Activated CD4-positive, alpha-beta T cell treated with anti-CD3 and anti-CD28 coated beads, Interleukin-2, amount 10 ng/mL, durations not matched to agents 7 days and 5 days (primary cell): ENCODE measurements at regions of chr11 and their contacts with region 1.

Region 1: GRCh38 chr11:33033493-33033892 is 5.9 kb upstream of the TCP11L1 start:
- DNase-seq: no peak
- H3K4me3 Mint-ChIP-seq: no peak overlapping the region
- H3K27ac Mint-ChIP-seq: no peak overlapping the region
- H3K4me1 Mint-ChIP-seq: no peaks in the 10 kb centered on the region
- H3K27me3 Mint-ChIP-seq: peaks cover 24% of the 10 kb centered on the region

Region 2: DNA sequence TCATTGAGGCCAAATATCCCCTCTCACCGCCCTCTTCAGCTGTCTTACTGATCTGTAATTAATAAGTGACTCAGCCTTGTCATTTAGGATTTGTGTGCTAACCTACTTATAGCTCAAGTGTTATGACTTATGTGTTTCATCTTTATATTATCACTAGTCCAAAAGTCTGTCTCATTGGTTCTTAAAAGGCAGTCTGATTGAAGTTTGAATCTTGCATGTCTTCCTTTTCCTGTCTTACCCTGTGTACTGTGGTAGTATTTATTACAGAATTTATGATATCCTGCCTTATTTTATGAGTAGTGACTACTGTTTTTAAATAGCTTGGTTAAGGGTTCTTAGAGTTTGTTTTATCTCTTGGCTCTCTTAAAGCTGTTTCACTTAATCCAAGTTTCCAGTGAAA is 11.6 kb before region 1 on chr11:
- CTCF ChIA-PET with region 1: interaction called, 13 read pairs
- POLR2A ChIA-PET with region 1: no interaction called
- DNase-seq: no peak
- H3K4me3 Mint-ChIP-seq: no peak overlapping the region
- H3K27ac Mint-ChIP-seq: no peak overlapping the region
- H3K4me1 Mint-ChIP-seq: peaks cover 4% of the 10 kb centered on the region
- H3K27me3 Mint-ChIP-seq: peaks cover 19% of the 10 kb centered on the region

Region 3: GRCh38 chr11:33376331-33377310 is 343.1 kb after region 1 on chr11:
- CTCF ChIA-PET with region 1: no interaction called
- POLR2A ChIA-PET with region 1: no interaction called
- DNase-seq: no peak
- H3K4me3 Mint-ChIP-seq: no peak overlapping the region
- H3K27ac Mint-ChIP-seq: no peak overlapping the region
- H3K4me1 Mint-ChIP-seq: peaks cover 1% of the 10 kb centered on the region
- H3K27me3 Mint-ChIP-seq: peaks cover 52% of the 10 kb centered on the region